OCI-LY7 (cell line): ENCODE measurements at regions of chr2 and their contacts with region 1.

Region 1: GRCh38 chr2:6352906-6353515 is 512.7 kb downstream of the CMPK2 start:
- DNase-seq: peak; percentile 18
- H3K4me3 ChIP-seq: peak overlapping the region; percentile 28
- H3K27ac ChIP-seq: peak overlapping the region; percentile 90
- H3K4me1 ChIP-seq: peaks cover 91% of the 10 kb centered on the region
- CTCF ChIP-seq: peak; percentile 50; the same call in 1 of the 2 replicates

Region 2: GRCh38 chr2:5915881-5916310 is 437.1 kb before region 1 on chr2:
- CTCF ChIA-PET with region 1: no interaction called
- POLR2A ChIA-PET with region 1: no interaction called
- intact Hi-C with region 1: loop called (anchors 10 kb)
- DNase-seq: peak; percentile 41
- H3K4me3 ChIP-seq: no peak overlapping the region
- H3K27ac ChIP-seq: no peak overlapping the region
- H3K4me1 ChIP-seq: no peaks in the 10 kb centered on the region
- CTCF ChIP-seq: peak; percentile 78

Region 3: GRCh38 chr2:6139916-6140315 is 213.1 kb before region 1 on chr2:
- CTCF ChIA-PET with region 1: no interaction called
- POLR2A ChIA-PET with region 1: no interaction called
- intact Hi-C with region 1: loop called (anchors 1 kb)
- DNase-seq: no peak
- H3K4me3 ChIP-seq: no peak overlapping the region
- H3K27ac ChIP-seq: no peak overlapping the region
- H3K4me1 ChIP-seq: peaks cover 7% of the 10 kb centered on the region
- CTCF ChIP-seq: no peak

Region 4: DNA sequence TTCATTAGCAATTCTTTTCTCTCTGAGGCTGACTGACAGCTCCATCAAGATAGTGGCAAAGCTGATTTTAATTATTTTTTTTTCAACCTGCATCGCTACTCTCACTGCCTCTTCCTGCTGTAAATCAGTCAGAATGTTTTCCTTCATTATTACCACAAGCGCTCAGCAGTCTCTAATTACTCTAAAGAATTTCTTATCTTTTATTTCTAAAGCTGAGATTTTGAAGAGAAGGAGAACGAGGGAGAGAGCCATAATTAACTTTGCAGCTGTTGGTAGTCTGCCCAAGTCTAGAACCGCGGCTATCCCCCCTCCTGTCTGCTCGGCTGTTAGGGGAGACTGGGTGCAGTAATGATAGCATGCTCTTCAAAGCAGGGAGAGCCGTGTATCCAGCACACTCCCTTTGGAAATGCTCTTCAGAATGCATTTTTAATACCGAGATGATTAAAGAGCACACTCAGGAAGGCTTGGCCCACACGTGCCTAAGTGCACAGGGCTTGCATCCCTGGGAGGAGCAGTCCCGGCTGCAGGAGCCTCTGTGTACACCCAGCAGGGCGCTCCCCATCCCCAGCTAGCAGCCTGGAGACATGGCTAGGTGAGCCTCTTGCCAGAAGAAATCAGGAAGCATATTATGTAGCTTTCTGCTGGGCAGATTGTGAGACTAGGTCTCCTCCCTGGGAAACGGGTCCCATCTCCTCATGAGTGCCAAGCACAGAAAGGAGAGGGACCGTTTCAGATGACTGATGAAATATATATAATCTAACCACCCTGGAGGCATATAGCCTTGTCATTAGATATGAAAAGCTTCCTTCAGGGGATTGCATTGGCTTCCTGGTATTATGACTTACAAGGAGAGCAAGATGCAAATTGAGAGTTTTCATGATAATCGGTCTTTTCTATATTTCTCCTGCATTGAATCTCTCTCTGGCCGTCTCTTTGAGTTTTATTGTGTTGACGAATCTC is 42.5 kb before region 1 on chr2:
- CTCF ChIA-PET with region 1: no interaction called
- POLR2A ChIA-PET with region 1: interaction called, 9 read pairs
- intact Hi-C with region 1: loop called (anchors 1 kb)
- DNase-seq: peak; percentile 72
- H3K4me3 ChIP-seq: peak overlapping the region; percentile 59
- H3K27ac ChIP-seq: peak overlapping the region; percentile 99
- H3K4me1 ChIP-seq: peaks cover 75% of the 10 kb centered on the region
- CTCF ChIP-seq: no peak